ENCODE measurements at regions of chr12 and their contacts with region 1.

Region 1: GRCh38 chr12:21438643-21439042 is 1.2 kb downstream of the PYROXD1 start:
- DNase-seq: no peak
- H3K4me3 ChIP-seq: peak overlapping the region in 1 of 3 experiments; percentile 85
- H3K27ac ChIP-seq: no peak overlapping the region
- H3K4me1 ChIP-seq: peaks cover 4% of the 10 kb centered on the region
- H3K27me3 ChIP-seq: no peaks in the 10 kb centered on the region
- CTCF ChIP-seq: no peak
- POLR2A ChIP-seq: no peak

Region 2: DNA sequence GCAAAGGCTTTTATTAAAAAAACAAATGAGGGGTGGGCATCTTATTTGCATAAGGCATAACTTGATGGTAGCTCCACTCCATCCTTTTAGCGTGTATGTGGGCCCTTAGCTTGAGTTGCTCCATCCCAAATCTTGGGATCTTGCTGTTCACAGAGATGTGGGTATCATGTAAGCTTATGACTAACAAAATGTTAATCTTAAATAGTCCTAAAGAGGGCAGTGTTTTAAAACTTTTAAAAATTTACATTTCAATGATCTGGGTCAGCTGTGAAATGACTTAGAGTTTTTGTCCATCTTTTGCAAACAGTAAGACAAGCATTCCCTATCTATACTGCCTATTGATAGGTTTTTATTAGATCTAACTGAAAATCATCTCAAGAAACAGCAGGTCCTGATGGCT is 190.0 kb before region 1 on chr12:
- CTCF ChIA-PET with region 1: interaction called, 7 read pairs
- POLR2A ChIA-PET with region 1: no interaction called
- dilution Hi-C with region 1: no loop called
- intact Hi-C with region 1: loop called (anchors 5 kb)
- DNase-seq: peak; percentile 22
- H3K4me3 ChIP-seq: no peak overlapping the region
- H3K27ac ChIP-seq: no peak overlapping the region
- H3K4me1 ChIP-seq: no peaks in the 10 kb centered on the region
- H3K27me3 ChIP-seq: no peaks in the 10 kb centered on the region
- CTCF ChIP-seq: no peak
- POLR2A ChIP-seq: no peak

Region 3: DNA sequence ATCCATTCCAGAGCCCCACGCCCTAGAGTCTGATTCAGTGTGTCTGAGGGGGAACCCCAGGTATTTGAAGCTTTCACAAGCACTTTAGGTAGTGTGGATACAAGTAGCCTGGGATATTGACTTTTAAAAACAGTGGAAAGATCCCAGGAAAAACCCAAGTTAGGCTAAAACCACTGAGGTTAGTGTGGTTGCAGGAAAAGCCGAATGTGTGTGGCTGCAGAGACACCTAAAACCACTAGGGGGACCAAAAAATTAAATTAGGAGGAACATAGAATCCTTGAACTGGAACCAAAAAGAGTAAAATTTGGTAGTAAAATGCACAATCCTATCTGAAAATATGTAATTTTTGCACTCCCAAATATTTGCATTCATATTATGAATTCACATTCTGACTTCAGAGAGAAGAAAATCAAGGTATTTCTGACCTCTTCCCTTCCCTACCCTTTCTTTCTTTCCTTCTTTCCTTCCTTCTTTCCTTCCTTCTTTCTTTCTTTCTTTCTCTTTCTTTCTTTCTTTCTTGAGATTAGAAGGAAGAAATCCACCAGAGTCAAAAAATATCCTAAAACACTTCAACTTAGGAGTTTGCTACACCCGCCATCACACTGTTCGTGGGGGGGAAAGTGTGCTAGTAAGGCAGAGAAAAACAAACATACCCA is 141.8 kb before region 1 on chr12:
- CTCF ChIA-PET with region 1: interaction called, 12 read pairs
- POLR2A ChIA-PET with region 1: no interaction called
- dilution Hi-C with region 1: no loop called
- intact Hi-C with region 1: loop called (anchors 2 kb)
- DNase-seq: peak; percentile 13
- H3K4me3 ChIP-seq: no peak overlapping the region
- H3K27ac ChIP-seq: no peak overlapping the region
- H3K4me1 ChIP-seq: no peaks in the 10 kb centered on the region
- H3K27me3 ChIP-seq: no peaks in the 10 kb centered on the region
- CTCF ChIP-seq: peak; percentile 62 to 65
- POLR2A ChIP-seq: no peak

Region 4: GRCh38 chr12:21308785-21309184 is 129.9 kb before region 1 on chr12:
- CTCF ChIA-PET with region 1: interaction called, 9 read pairs
- POLR2A ChIA-PET with region 1: no interaction called
- dilution Hi-C with region 1: no loop called
- intact Hi-C with region 1: loop called (anchors 1 kb)
- DNase-seq: peak; percentile 4
- H3K4me3 ChIP-seq: no peak overlapping the region
- H3K27ac ChIP-seq: no peak overlapping the region
- H3K4me1 ChIP-seq: no peaks in the 10 kb centered on the region
- H3K27me3 ChIP-seq: peaks cover 1 to 3% of the 10 kb centered on the region in 2 experiments
- CTCF ChIP-seq: no peak
- POLR2A ChIP-seq: no peak

Region 5: DNA sequence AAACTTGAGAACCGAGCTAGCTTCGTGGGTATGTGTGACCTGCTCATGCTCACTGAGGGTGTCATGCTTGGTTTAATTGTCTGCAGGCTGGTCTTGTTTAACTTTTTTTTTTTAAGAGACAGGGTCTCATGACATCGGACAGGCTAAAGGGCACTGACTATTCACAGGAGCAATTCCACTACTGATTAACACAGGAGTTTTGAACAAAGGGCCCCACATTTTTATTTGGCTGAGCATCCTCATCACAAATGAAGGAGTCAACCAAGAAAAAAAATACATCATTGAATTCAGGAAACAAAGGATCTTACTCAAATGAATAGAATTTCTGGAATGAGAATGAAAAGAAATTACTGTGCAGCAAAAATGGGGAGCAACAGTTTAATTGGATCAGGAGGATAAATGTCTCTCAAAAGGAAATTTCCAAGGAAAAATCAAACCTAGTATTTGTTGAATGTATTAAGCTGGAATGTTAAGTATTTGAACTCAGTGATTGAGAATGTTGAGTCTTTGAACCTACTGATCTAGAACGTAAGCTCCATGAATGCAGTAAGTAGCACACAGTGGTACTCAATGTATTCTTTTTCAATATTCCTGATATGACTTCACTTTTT is 22.0 kb before region 1 on chr12:
- CTCF ChIA-PET with region 1: interaction called, 10 read pairs
- POLR2A ChIA-PET with region 1: interaction called, 4 read pairs
- dilution Hi-C with region 1: no loop called
- intact Hi-C with region 1: loop called (anchors 2 kb)
- DNase-seq: peak; percentile 76
- H3K4me3 ChIP-seq: no peak overlapping the region
- H3K27ac ChIP-seq: peak overlapping the region; percentile 84
- H3K4me1 ChIP-seq: peaks cover 23% of the 10 kb centered on the region
- H3K27me3 ChIP-seq: no peaks in the 10 kb centered on the region
- CTCF ChIP-seq: no peak
- POLR2A ChIP-seq: no peak

Region 6: DNA sequence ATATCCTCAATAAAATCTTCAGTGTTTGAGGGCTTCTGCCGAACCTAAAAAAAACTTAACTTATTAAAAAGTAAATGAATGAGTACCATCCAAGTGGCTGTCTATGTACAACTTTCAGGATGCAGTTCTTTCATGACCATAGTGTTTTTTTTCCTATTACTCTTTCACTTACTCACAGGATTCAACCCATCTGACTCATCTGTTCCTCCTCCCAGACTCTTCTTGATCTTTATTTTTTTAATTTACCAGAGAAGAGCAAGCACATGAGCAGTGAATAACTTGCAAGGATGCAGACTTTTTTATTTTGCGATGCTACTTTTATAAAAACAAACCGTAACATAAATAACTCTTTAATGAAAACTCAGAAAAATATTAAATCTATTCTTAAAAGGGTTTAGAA is 38.3 kb after region 1 on chr12:
- CTCF ChIA-PET with region 1: no interaction called
- POLR2A ChIA-PET with region 1: no interaction called
- dilution Hi-C with region 1: no loop called
- intact Hi-C with region 1: no loop called
- DNase-seq: peak; percentile 48
- H3K4me3 ChIP-seq: no peak overlapping the region
- H3K27ac ChIP-seq: no peak overlapping the region
- H3K4me1 ChIP-seq: peaks cover 6% of the 10 kb centered on the region
- H3K27me3 ChIP-seq: no peaks in the 10 kb centered on the region
- CTCF ChIP-seq: no peak
- POLR2A ChIP-seq: no peak

Region 7: GRCh38 chr12:21501379-21501956 is 62.8 kb after region 1 on chr12 and contains the starts of genes GOLT1B and RECQL:
- CTCF ChIA-PET with region 1: no interaction called
- POLR2A ChIA-PET with region 1: no interaction called
- dilution Hi-C with region 1: no loop called
- intact Hi-C with region 1: loop called (anchors 1 kb)
- DNase-seq: peak; percentile 99
- H3K4me3 ChIP-seq: peak within 1 kb of the TSS; percentile 80 to 92 (median 88)
- H3K27ac ChIP-seq: peak within 1 kb of the TSS; percentile 87
- H3K4me1 ChIP-seq: peaks cover 31% of the 10 kb centered on the region
- H3K27me3 ChIP-seq: no peaks in the 10 kb centered on the region
- CTCF ChIP-seq: no peak
- POLR2A ChIP-seq: peak; percentile 90
- total RNA-seq, gene GOLT1B: 50.5 and 59.4 TPM in 2 replicates
- total RNA-seq, gene RECQL: 50.3 and 51.4 TPM in 2 replicates

Region 8: DNA sequence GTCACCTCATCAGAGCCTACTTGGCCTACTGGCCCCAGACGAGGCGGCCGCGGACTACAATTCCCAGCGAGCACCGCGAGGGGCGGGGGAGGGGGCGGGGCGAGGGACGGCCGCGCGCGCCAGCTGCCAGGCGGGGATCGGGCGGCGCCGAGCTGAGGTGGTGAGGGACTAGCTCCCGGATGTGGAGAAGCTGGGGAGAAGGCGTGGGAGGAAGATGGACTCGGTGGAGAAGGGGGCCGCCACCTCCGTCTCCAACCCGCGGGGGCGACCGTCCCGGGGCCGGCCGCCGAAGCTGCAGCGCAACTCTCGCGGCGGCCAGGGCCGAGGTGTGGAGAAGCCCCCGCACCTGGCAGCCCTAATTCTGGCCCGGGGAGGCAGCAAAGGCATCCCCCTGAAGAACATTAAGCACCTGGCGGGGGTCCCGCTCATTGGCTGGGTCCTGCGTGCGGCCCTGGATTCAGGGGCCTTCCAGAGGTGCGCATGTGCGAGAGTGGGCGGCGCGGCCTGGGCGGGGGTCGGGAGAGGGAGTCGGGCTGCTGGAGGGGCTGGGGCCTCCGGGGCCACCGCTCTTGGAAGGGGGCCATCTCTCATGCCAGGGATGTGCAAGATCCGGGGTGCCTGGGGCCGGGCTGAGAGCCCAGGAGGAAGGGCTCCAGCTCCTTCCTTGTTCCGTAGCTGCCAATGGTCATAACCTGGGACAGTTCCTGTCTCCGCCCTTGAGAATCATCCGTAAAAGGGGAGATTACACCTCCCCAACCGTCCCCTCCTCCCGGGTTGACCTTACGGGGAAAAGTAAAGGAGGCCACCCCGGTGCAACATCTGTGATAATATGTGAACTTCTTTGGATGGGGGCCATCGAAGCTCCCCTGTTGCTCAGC is 607.7 kb after region 1 on chr12 and contains the start of gene CMAS:
- CTCF ChIA-PET with region 1: no interaction called
- POLR2A ChIA-PET with region 1: no interaction called
- dilution Hi-C with region 1: no loop called
- intact Hi-C with region 1: loop called (anchors 5 kb)
- DNase-seq: peak; percentile 56
- H3K4me3 ChIP-seq: peak within 1 kb of the TSS; percentile 90 to 92 (median 92)
- H3K27ac ChIP-seq: peak within 1 kb of the TSS; percentile 69
- H3K4me1 ChIP-seq: peaks cover 12% of the 10 kb centered on the region
- H3K27me3 ChIP-seq: no peaks in the 10 kb centered on the region
- CTCF ChIP-seq: no peak
- POLR2A ChIP-seq: peak; percentile 73
- total RNA-seq, gene CMAS: 34.4 and 35.4 TPM in 2 replicates

Measured in endothelial cell of umbilical vein (primary cell).